Gastrocnemius medialis (tissue), 4 donors: ENCODE measurements at regions of chr3 and their contacts with region 1.

Region 1: GRCh38 chr3:48918388-48919214 is at the start of gene ARIH2:
- DNase-seq: peak; percentile 86 to 92
- ATAC-seq: peak; percentile 92
- H3K4me3 ChIP-seq: peak within 1 kb of the TSS; percentile 73 to 94 (median 92)
- H3K27ac ChIP-seq: peak within 1 kb of the TSS; percentile 93 to 99 (median 96)
- H3K4me1 ChIP-seq: peaks cover 30 to 33% of the 10 kb centered on the region in 2 donors
- H3K27me3 ChIP-seq: no peaks in the 10 kb centered on the region
- CTCF ChIP-seq: peak; percentile 16 to 38 (median 30)
- POLR2A ChIP-seq: peak; percentile 93 to 94
- total RNA-seq, gene ARIH2: 118 to 176 (median 143) TPM

Region 2: GRCh38 chr3:48739955-48740823 is 178.4 kb before region 1 on chr3:
- in situ Hi-C with region 1: no loop called
- intact Hi-C with region 1: loop called (anchors 5 kb)
- DNase-seq: peak; percentile 80 to 94
- ATAC-seq: peak; percentile 83 to 87
- H3K4me3 ChIP-seq: peak overlapping the region; percentile 8 to 30 (median 16)
- H3K27ac ChIP-seq: peak overlapping the region; percentile 74 to 89 (median 78)
- H3K4me1 ChIP-seq: peaks cover 26 to 45% of the 10 kb centered on the region in 2 donors
- H3K27me3 ChIP-seq: no peaks in the 10 kb centered on the region
- CTCF ChIP-seq: peak; percentile 71 to 91 (median 87)
- POLR2A ChIP-seq: no peak

Region 3: DNA sequence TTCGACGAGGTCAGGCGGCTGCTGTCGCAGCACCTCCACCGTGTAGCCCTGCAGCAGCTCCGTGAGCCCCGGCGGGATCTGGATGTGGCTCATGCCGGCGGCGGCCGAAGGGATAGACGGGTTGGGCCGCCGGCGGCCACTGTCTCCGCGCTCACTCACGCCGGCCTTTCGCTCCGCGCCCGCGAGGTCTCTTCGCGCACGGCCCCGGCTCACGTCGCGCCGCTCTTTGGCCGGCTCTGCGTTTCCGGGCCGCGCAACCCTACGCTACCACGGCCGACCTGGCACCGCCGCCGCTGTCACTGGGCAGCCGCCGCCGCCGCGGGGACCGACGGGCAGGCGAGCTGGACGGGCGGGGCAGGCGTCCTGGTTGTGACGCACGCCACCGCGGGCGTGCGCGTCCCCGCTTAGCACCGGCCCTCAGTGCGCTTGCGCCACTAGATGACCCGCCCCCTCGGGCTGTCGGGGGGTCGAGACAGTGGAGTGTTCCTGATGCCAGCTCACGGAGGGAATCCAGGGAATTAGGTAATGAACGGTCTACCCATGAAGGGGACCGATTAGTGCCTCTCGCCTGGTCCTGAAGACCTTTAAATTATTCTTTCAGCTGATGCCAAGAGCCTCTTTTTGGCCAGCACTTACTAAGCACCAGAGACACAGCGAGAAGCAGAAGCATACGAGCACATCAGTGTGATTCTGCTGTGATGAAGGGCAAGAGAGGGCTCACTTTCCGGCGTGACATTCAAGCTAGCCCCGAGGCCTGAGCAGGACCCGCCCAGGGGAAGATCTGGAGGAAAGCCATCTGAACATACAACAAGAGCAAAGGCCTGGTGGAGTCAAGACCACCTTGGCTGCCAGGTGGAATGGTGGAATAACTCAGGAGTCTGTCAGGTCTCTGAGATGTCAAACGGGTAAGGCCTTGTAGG is 70.8 kb before region 1 on chr3 and contains the start of gene PRKAR2A:
- in situ Hi-C with region 1: no loop called
- intact Hi-C with region 1: loop called (anchors 5 kb)
- DNase-seq: peak; percentile 77 to 90
- ATAC-seq: peak; percentile 86 to 88
- H3K4me3 ChIP-seq: peak within 1 kb of the TSS; percentile 69 to 94 (median 80)
- H3K27ac ChIP-seq: peak within 1 kb of the TSS; percentile 91 to 99 (median 95)
- H3K4me1 ChIP-seq: peaks cover 20 to 37% of the 10 kb centered on the region in 2 donors
- H3K27me3 ChIP-seq: no peaks in the 10 kb centered on the region
- CTCF ChIP-seq: no peak
- POLR2A ChIP-seq: peak; percentile 90 to 96
- total RNA-seq, gene PRKAR2A: 62.2 to 97.1 (median 80.2) TPM

Region 4: DNA sequence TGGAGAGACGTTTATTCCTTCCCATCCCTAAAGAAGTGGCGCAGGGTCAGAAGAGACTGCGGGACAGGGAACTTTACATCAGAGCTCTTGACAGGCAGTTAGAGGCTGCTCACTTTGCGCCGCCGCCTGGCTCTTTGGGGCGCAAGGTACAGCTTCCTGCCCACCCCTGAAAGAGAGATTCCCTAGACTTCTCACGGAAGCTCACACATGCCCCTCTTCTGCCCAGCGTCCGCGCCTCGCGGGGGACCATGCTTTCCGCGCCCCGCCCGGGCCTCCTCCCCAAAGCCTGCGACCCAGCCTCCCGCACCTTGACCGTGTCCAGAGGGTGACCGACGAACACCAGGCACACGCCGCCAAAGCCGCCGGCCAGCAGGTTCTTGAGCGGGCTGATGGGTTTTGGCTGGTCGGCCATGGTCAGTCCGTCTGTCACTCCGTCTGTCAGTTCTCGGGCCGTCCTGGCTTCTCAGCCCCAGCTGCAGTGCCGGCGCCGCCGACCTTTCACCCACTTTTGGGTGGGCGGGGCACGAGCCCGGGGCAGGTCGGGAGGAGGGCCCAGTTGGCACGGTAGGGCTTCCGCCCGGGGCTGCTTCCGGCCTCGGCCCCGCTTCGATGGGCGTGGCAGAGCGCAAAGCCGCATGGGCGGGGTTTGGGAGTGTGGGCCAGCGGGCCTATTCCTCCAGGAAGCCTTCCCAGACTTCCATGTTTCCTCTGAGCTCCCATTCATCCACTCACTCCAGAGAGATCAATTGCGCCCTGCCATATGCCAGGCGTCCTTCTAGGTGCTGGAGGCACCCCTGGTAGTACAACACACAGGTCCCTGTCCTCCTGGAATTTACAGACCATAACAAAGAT is 20.0 kb before region 1 on chr3 and contains the start of gene SLC25A20:
- in situ Hi-C with region 1: no loop called
- intact Hi-C with region 1: loop called (anchors 1 kb)
- DNase-seq: peak; percentile 68 to 92
- ATAC-seq: peak; percentile 94 to 95
- H3K4me3 ChIP-seq: peak within 1 kb of the TSS; percentile 72 to 92 (median 84)
- H3K27ac ChIP-seq: peak within 1 kb of the TSS; percentile 83 to 92 (median 86)
- H3K4me1 ChIP-seq: peaks cover 13 to 21% of the 10 kb centered on the region in 2 donors
- H3K27me3 ChIP-seq: no peaks in the 10 kb centered on the region
- CTCF ChIP-seq: peak in 2 of 5 experiments; percentile 16 to 19
- POLR2A ChIP-seq: peak in 1 of 2 donors; percentile 69
- total RNA-seq, gene SLC25A20: 67.8 to 110 (median 83.4) TPM

Region 5: DNA sequence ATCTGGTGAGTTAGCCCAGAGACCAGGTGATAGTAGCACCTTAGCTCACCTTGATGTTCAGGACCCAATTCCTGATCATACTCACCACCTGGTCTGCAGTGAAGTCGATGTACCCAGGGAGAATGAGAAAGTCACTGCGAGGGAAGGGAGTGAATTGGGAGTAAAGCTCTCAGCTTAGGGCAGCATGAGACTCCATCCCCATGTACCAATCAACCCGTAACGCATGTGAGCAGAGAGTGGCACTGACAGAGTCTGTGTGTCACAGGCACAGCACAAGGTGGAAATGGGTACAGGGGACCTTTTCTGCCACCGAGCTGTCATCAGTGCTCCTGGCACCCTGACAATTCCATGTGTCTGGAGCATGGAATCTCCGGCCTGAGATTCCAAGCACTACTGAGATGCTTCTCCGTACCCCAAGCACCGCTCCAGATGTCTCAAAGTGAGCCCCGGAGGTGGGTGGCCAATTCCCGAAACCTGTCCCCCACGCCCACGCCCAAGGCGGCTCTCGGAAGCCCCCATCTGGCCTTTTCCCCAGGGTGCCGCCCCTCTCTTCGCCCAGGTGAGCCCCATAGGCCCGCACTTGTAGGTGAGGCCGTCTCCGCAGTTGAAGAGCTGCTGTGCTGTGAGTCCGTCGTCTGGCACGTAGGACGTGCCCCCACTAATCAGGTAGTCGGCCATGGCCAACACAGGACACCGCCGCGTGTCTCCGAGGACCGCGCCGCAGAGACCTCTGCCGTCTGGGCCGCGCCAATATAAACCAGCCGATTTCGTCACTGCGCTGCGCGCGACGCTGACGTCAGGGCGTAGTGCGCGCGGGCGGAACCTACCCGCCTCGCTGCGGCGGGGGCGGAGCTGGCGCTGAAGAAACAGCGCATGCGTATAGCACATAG is 110.3 kb after region 1 on chr3 and contains the start of gene IMPDH2:
- in situ Hi-C with region 1: no loop called
- intact Hi-C with region 1: loop called (anchors 2 kb)
- DNase-seq: peak; percentile 83 to 92
- ATAC-seq: peak; percentile 94
- H3K4me3 ChIP-seq: peak within 1 kb of the TSS; percentile 70 to 86 (median 86)
- H3K27ac ChIP-seq: peak within 1 kb of the TSS; percentile 94 to 98 (median 96)
- H3K4me1 ChIP-seq: peaks cover 22 to 31% of the 10 kb centered on the region in 2 donors
- H3K27me3 ChIP-seq: no peaks in the 10 kb centered on the region
- CTCF ChIP-seq: peak in 2 of 5 experiments; percentile 21 to 23
- POLR2A ChIP-seq: peak; percentile 98
- total RNA-seq, gene IMPDH2: 178 to 229 (median 205) TPM